H1 (cell line): ENCODE measurements at regions of chr10 and their contacts with region 1.

Region 1: DNA sequence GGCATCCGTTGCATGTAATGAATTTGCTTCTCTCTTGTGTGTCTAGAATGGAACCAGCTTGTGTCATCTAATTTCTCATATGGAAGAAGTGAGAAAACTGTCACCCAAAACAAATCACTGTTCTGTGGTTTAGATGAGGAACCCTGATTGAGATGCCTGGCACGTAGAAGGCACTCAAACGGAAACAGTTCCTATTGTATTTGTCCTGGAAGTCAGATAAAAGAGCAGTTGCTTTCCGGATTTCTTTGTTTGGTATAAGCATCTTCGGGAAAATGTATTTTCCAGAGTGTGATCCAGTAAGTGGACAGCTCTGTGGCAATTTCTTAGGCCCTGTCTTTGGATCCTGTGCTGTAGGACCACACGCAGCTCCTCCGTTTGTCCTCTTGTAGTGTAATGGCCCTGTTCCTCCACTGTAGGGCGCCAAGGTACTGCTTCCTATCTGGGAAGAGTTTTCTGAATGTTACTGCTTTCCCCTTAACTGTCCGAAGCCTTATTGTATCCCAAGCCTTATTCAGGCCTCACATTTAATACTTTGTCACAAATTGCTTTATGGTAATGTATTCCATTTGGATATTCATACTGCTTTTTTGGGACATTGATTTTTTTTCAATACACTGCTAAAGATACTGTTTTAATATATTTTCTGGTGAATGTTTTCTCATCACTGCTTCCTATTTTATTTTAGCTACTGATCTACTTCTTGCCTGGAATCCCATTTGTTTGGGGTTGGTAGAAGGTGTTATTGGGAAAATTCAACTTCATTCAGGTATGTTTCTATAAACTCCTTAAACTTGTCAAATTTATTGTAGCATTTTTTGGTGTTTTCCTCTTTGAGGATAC is 24.8 kb downstream of the INPP5F start:
- DNase-seq: peak in 1 of 2 experiments; percentile 69
- H3K4me3 ChIP-seq: no peak overlapping the region
- H3K27ac ChIP-seq: no peak overlapping the region
- H3K4me1 ChIP-seq: peaks cover 0 to 4% (median 2%) of the 10 kb centered on the region in 4 experiments; a peak in 2 of 7 replicates
- H3K27me3 ChIP-seq: no peaks in the 10 kb centered on the region
- CTCF ChIP-seq: peak; percentile 74 to 99 (median 83)
- EP300 ChIP-seq: no peak
- POLR2A ChIP-seq: no peak
- RAD21 ChIP-seq: peak; percentile 98 to 99

Region 2: DNA sequence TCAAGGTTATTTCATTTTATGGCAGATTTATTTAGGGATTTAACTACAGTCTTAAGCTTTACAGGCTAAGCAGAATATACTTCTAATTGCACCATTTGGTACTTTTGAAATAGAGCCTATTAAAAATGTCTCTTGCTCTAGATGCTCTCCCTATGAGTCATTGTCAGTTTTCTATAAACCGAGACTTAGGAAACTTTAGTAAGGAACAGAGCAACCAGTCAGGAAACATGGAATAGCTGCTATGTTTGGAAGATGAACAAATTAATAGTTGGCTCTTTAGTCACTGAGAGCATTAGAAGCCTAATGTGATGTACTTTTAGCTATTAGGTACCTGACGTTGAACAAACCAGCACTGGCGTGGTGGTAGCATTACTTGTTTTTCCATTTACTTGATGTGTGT is 10.5 kb after region 1 on chr10:
- CTCF ChIA-PET with region 1: interaction called, 23 read pairs
- POLR2A ChIA-PET with region 1: no interaction called
- DNase-seq: no peak
- H3K4me3 ChIP-seq: no peak overlapping the region
- H3K27ac ChIP-seq: no peak overlapping the region
- H3K4me1 ChIP-seq: peaks cover 0 to 2% (median 0%) of the 10 kb centered on the region in 4 experiments; a peak in 2 of 7 replicates
- H3K27me3 ChIP-seq: no peaks in the 10 kb centered on the region; a peak in 1 of 7 replicates
- CTCF ChIP-seq: no peak
- EP300 ChIP-seq: no peak
- POLR2A ChIP-seq: no peak
- RAD21 ChIP-seq: no peak

Region 3: GRCh38 chr10:119807960-119808697 is 57.5 kb after region 1 on chr10:
- CTCF ChIA-PET with region 1: interaction called, 14 read pairs
- POLR2A ChIA-PET with region 1: no interaction called
- DNase-seq: no peak
- H3K4me3 ChIP-seq: no peak overlapping the region
- H3K27ac ChIP-seq: no peak overlapping the region
- H3K4me1 ChIP-seq: no peaks in the 10 kb centered on the region
- H3K27me3 ChIP-seq: no peaks in the 10 kb centered on the region
- CTCF ChIP-seq: no peak
- EP300 ChIP-seq: no peak
- POLR2A ChIP-seq: no peak
- RAD21 ChIP-seq: no peak

Region 4: GRCh38 chr10:119826771-119827170 is 76.2 kb after region 1 on chr10:
- CTCF ChIA-PET with region 1: interaction called, 61 read pairs
- POLR2A ChIA-PET with region 1: interaction called, 11 read pairs
- DNase-seq: no peak
- H3K4me3 ChIP-seq: no peak overlapping the region
- H3K27ac ChIP-seq: no peak overlapping the region
- H3K4me1 ChIP-seq: no peaks in the 10 kb centered on the region
- H3K27me3 ChIP-seq: no peaks in the 10 kb centered on the region
- CTCF ChIP-seq: no peak
- EP300 ChIP-seq: no peak
- POLR2A ChIP-seq: no peak
- RAD21 ChIP-seq: no peak

Region 5: GRCh38 chr10:119859420-119860258 is 109.0 kb after region 1 on chr10:
- CTCF ChIA-PET with region 1: interaction called, 59 read pairs
- POLR2A ChIA-PET with region 1: interaction called, 3 read pairs
- DNase-seq: no peak
- H3K4me3 ChIP-seq: no peak overlapping the region
- H3K27ac ChIP-seq: no peak overlapping the region
- H3K4me1 ChIP-seq: peaks cover 0 to 6% (median 3%) of the 10 kb centered on the region in 4 experiments; a peak in 4 of 7 replicates
- H3K27me3 ChIP-seq: no peaks in the 10 kb centered on the region
- CTCF ChIP-seq: peak in 2 of 3 experiments; percentile 18 to 43; a peak in 2 of 4 replicates
- EP300 ChIP-seq: no peak
- POLR2A ChIP-seq: no peak
- RAD21 ChIP-seq: peak in 1 of 2 experiments; percentile 55; a peak in 3 of 4 replicates